ENCODE measurements at regions of chr13 and their contacts with region 1.

Region 1: DNA sequence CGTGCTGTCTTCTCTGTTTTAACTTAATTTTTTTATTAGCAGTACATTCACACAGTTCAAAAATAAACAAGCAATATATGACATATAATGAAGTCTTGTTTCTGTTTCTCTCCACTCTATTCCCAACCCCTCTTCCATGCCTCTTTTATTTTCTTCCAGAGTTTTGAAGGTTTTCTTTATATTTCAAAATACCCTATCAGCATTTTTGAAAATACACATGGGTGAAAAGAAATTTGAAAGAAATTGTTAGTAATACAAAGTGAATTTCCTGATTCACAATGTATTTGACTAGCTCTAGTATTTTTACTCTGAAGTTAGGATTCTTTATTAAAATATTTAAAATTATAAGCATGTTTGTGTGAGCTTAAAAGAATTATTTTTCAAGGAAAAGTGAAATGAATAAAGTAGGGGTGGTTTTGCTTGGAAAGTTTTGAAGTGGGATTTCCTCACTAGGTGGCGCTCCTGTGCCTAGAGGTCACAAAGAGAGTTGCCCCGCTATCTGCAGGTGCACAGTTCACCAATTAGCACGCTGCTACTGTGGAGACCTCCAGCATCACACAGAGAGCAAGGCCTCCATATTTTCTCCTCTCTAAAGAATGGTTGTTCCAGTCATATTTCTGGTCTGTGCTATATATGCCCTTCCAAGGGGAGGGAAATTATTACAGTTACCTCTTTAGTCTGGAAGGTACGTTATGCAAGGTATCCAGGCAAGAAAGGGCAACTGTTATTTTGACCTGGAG is 37.6 kb downstream of the SOX21 start:
- DNase-seq: peak; percentile 59
- ATAC-seq: peak; percentile 93
- H3K4me3 ChIP-seq: no peak overlapping the region
- H3K27ac ChIP-seq: no peak overlapping the region
- H3K4me1 ChIP-seq: no peaks in the 10 kb centered on the region
- H3K27me3 ChIP-seq: peaks cover 0 to 5% of the 10 kb centered on the region in 2 experiments; a peak in 2 of 5 replicates
- CTCF ChIP-seq: peak; percentile 73
- EP300 ChIP-seq: no peak
- POLR2A ChIP-seq: no peak
- RAD21 ChIP-seq: peak; percentile 39; the same call in 1 of the 2 replicates

Region 2: DNA sequence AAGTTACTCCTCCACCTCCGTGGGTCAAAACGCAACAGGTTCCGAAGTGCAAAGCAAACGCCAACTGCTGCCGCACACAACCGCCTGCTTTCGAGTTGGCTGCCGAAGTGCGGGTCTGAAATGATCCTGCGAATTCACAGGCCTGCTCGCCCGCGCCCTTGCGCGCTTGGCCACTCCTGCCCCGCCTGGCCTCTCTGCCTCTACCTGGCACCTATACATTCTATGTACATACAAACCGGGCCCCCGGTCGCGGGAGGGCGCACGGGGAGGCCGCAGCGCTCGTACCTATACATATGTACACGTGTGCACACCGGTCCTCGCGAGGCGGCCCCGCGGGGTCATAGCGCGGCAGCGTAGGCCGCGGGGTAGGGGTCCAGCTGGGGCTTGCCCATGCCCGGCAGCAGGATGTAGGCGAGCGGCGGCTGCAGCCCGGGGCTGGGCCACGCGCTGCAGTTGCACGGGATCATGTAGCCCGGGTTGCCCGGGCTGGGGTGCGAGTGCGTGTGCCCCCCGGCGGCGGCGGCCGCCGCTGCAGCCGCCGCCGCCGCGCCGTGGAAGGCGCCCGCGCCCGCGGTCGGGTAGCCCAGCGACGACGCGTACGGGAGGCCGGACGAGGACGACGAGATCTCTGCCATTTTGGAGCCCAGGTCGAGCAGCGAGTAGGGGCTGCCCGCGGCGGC is 36.2 kb after region 1 on chr13:
- CTCF ChIA-PET with region 1: no interaction called
- POLR2A ChIA-PET with region 1: no interaction called
- in situ Hi-C with region 1: no loop called
- intact Hi-C with region 1: loop called (anchors 5 kb)
- DNase-seq: no peak
- ATAC-seq: peak; percentile 86
- H3K4me3 ChIP-seq: peak overlapping the region; percentile 22 to 63 (median 38); a peak in 5 of 6 replicates
- H3K27ac ChIP-seq: no peak overlapping the region
- H3K4me1 ChIP-seq: no peaks in the 10 kb centered on the region
- H3K27me3 ChIP-seq: peaks cover 8 to 75% of the 10 kb centered on the region in 2 experiments; a peak in 4 of 5 replicates
- CTCF ChIP-seq: peak; percentile 21; the same call in 1 of the 2 replicates
- EP300 ChIP-seq: no peak
- POLR2A ChIP-seq: no peak
- RAD21 ChIP-seq: no peak

Region 3: DNA sequence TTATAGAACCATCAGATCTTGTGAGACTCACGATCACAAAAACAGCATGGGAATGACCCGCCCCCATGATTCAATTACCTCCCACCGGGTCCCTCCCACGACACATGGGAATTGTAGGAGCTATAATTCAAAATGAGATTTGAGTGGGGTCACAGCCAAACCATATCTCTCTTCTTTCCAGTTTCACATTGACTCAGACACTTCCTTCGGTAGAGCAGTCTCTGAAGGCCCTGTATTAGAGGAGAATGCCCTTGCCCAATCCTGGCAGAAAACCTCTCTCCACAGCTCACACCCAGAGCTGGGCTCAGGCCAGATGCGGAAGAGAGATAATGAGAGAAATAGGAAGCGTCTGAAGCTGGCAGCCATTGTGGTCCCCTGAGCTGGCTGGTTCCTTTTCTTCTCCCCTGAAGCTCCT is 805.4 kb after region 1 on chr13:
- CTCF ChIA-PET with region 1: no interaction called
- POLR2A ChIA-PET with region 1: no interaction called
- in situ Hi-C with region 1: no loop called
- intact Hi-C with region 1: loop called (anchors 2 kb)
- DNase-seq: no peak
- ATAC-seq: no peak
- H3K4me3 ChIP-seq: no peak overlapping the region
- H3K27ac ChIP-seq: no peak overlapping the region
- H3K4me1 ChIP-seq: no peaks in the 10 kb centered on the region
- H3K27me3 ChIP-seq: peaks cover 2 to 11% of the 10 kb centered on the region in 2 experiments
- CTCF ChIP-seq: no peak
- EP300 ChIP-seq: no peak
- POLR2A ChIP-seq: no peak
- RAD21 ChIP-seq: no peak